HepG2 (cell line): ENCODE measurements at regions of chr7 and their contacts with region 1.

Region 1: DNA sequence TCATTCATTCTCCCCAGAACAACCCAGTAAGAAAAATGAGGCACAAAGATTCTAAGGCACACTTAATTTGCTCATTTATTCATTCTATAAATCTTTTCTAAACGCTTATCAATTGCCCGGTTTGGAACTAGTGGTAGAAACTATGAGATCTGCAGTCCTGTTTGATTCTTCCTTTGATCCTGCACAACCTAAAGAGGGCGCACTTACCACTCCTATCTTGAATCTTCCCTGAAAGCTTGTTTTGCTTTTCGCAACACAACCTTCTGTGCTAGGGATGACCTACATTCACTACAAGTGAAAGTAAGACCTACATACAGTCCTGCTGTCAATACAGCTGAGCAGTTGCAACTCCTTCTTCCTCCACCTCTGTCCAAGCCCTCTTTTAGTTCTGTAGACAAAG is 12.6 kb upstream of the ARL4A start:
- DNase-seq: peak; percentile 84
- ATAC-seq: peak; percentile 94
- H3K4me3 ChIP-seq: no peak overlapping the region
- H3K27ac ChIP-seq: no peak overlapping the region
- H3K4me1 ChIP-seq: peaks cover 11% of the 10 kb centered on the region
- H3K27me3 ChIP-seq: no peaks in the 10 kb centered on the region
- CTCF ChIP-seq: peak; percentile 75
- EP300 ChIP-seq: no peak
- POLR2A ChIP-seq: no peak
- RAD21 ChIP-seq: peak; percentile 62

Region 2: GRCh38 chr7:12504149-12504548 is 170.7 kb before region 1 on chr7:
- CTCF ChIA-PET with region 1: no interaction called
- POLR2A ChIA-PET with region 1: no interaction called
- in situ Hi-C with region 1: no loop called
- intact Hi-C with region 1: no loop called
- DNase-seq: no peak
- ATAC-seq: no peak
- H3K4me3 ChIP-seq: no peak overlapping the region
- H3K27ac ChIP-seq: no peak overlapping the region
- H3K4me1 ChIP-seq: peaks cover 7% of the 10 kb centered on the region
- H3K27me3 ChIP-seq: no peaks in the 10 kb centered on the region
- CTCF ChIP-seq: no peak
- EP300 ChIP-seq: no peak
- POLR2A ChIP-seq: no peak
- RAD21 ChIP-seq: no peak

Region 3: DNA sequence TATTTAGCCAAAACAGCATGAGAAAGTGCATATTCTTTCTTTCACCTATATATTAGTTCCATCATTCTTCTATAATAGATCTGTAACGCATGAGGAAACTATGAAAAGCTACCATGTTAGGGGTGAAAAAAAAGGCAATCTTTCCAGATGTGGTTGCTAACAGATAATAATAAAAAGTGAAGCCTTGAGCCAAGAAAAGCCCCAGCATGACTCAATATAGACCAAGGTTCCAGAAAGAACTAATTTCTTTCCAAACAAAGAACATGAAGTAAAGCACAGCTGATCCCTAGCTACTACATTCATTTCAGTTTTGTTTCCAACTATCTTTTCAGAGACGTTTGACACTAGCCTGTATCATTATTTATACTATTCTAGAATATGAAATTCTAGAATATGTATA is 29.0 kb after region 1 on chr7:
- CTCF ChIA-PET with region 1: no interaction called
- POLR2A ChIA-PET with region 1: no interaction called
- in situ Hi-C with region 1: no loop called
- intact Hi-C with region 1: no loop called
- DNase-seq: no peak
- ATAC-seq: no peak
- H3K4me3 ChIP-seq: no peak overlapping the region
- H3K27ac ChIP-seq: no peak overlapping the region
- H3K4me1 ChIP-seq: no peaks in the 10 kb centered on the region
- H3K27me3 ChIP-seq: no peaks in the 10 kb centered on the region; a peak in 1 of 5 replicates
- CTCF ChIP-seq: no peak
- EP300 ChIP-seq: no peak
- POLR2A ChIP-seq: no peak
- RAD21 ChIP-seq: no peak

Region 4: DNA sequence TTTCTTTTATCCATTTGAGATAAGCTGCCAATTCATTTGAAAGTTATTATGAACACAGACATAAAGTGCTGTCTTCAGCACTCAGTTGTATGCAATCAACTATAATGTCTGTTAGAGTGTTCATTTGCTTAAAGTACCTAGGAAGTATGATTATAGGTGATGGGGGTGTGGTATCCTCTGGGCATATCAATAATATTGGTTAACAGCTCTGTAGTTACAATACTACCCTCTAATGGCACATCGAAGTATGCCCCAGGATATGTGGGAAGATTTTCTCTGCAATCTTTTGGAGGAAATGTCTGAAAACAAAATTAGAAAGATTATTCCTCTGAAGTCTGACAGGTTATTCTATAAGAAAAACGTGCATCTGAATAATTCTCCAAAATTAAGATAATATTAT is 442.3 kb after region 1 on chr7:
- CTCF ChIA-PET with region 1: interaction called, 4 read pairs
- POLR2A ChIA-PET with region 1: no interaction called
- in situ Hi-C with region 1: loop called (anchors 25 kb)
- intact Hi-C with region 1: loop called (anchors 1 kb)
- DNase-seq: peak; percentile 35
- ATAC-seq: peak; percentile 69
- H3K4me3 ChIP-seq: no peak overlapping the region
- H3K27ac ChIP-seq: no peak overlapping the region
- H3K4me1 ChIP-seq: peaks cover 10% of the 10 kb centered on the region; the same call in 1 of the 2 replicates
- H3K27me3 ChIP-seq: no peaks in the 10 kb centered on the region
- CTCF ChIP-seq: peak; percentile 70
- EP300 ChIP-seq: no peak
- POLR2A ChIP-seq: no peak
- RAD21 ChIP-seq: peak; percentile 65; the same call in 1 of the 2 replicates